CD8-positive, alpha-beta T cell (primary cell): ENCODE measurements at regions of chr6 and their contacts with region 1.

Region 1: GRCh38 chr6:111973118-111973761 is 80.7 kb upstream of the CCN6 start:
- DNase-seq: peak; percentile 22 to 86 (median 69)
- ATAC-seq: peak; percentile 92
- H3K4me3 ChIP-seq: no peak overlapping the region
- H3K4me3 Mint-ChIP-seq: peak overlapping the region; percentile 56
- H3K27ac ChIP-seq: peak overlapping the region; percentile 71 to 78
- H3K27ac Mint-ChIP-seq: peak overlapping the region; percentile 97
- H3K4me1 ChIP-seq: peaks cover 70% of the 10 kb centered on the region
- H3K4me1 Mint-ChIP-seq: peaks cover 69% of the 10 kb centered on the region
- H3K27me3 ChIP-seq: no peaks in the 10 kb centered on the region
- H3K27me3 Mint-ChIP-seq: no peaks in the 10 kb centered on the region
- CTCF ChIP-seq: no peak

Region 2: DNA sequence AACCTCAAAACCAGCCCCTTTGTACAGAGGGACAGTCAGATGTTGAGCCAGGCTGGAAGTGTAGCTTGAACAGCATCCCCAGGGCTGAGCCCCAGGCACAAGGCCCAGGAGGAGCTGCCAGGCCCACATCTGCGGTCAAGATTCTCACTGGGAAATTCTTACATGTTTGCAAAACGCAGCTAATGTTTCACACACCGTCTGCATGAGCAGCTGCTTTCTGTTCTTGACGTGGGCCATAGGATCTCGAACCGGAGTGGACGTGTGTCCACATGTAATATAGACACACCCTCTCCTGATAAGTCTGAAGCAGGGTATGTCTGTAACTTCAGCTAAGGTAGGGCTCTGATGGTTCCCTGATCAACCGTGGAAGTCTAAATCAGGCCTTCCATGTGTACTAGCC is 326.3 kb before region 1 on chr6:
- CTCF ChIA-PET with region 1: no interaction called
- POLR2A ChIA-PET with region 1: no interaction called
- intact Hi-C with region 1: no loop called
- DNase-seq: no peak
- ATAC-seq: no peak
- H3K4me3 ChIP-seq: no peak overlapping the region
- H3K4me3 Mint-ChIP-seq: no peak overlapping the region
- H3K27ac ChIP-seq: no peak overlapping the region
- H3K27ac Mint-ChIP-seq: no peak overlapping the region
- H3K4me1 ChIP-seq: no peaks in the 10 kb centered on the region
- H3K4me1 Mint-ChIP-seq: no peaks in the 10 kb centered on the region
- H3K27me3 ChIP-seq: no peaks in the 10 kb centered on the region
- H3K27me3 Mint-ChIP-seq: no peaks in the 10 kb centered on the region
- CTCF ChIP-seq: no peak

Region 3: GRCh38 chr6:111985202-111985731 is 12.0 kb after region 1 on chr6:
- CTCF ChIA-PET with region 1: interaction called, 4 read pairs
- POLR2A ChIA-PET with region 1: interaction called, 17 read pairs
- intact Hi-C with region 1: loop called in 1 of 2 experiments (anchors 1 kb)
- DNase-seq: peak in 5 of 9 experiments; percentile 25 to 79 (median 38)
- ATAC-seq: peak; percentile 53
- H3K4me3 ChIP-seq: no peak overlapping the region
- H3K4me3 Mint-ChIP-seq: peak overlapping the region; percentile 13
- H3K27ac ChIP-seq: peak overlapping the region in 1 of 2 experiments; percentile 30
- H3K27ac Mint-ChIP-seq: peak overlapping the region; percentile 81
- H3K4me1 ChIP-seq: peaks cover 66% of the 10 kb centered on the region
- H3K4me1 Mint-ChIP-seq: peaks cover 89% of the 10 kb centered on the region
- H3K27me3 ChIP-seq: no peaks in the 10 kb centered on the region
- H3K27me3 Mint-ChIP-seq: no peaks in the 10 kb centered on the region
- CTCF ChIP-seq: no peak

Region 4: DNA sequence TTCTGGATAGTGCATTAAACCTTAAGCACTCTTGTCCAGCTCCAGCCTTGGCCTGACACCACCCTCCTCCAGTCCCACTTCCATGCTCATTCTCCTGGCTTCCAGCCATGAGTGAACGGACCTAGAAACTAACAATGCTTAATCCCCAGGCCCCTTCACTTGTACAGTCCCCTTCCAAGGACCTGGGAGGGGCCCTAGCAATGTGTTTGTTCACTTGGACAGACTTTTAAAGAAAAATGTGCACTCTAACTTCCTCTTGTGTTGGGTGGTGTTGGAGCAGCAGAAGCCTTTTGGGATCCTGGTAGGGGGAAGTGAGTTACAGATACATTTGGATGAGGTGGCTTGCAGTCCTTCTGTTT is 31.8 kb after region 1 on chr6:
- CTCF ChIA-PET with region 1: no interaction called
- POLR2A ChIA-PET with region 1: no interaction called
- intact Hi-C with region 1: no loop called
- DNase-seq: no peak
- ATAC-seq: no peak
- H3K4me3 ChIP-seq: no peak overlapping the region
- H3K4me3 Mint-ChIP-seq: no peak overlapping the region
- H3K27ac ChIP-seq: no peak overlapping the region
- H3K27ac Mint-ChIP-seq: no peak overlapping the region
- H3K4me1 ChIP-seq: no peaks in the 10 kb centered on the region
- H3K4me1 Mint-ChIP-seq: no peaks in the 10 kb centered on the region
- H3K27me3 ChIP-seq: no peaks in the 10 kb centered on the region
- H3K27me3 Mint-ChIP-seq: no peaks in the 10 kb centered on the region
- CTCF ChIP-seq: no peak